Panc1 (cell line): ENCODE measurements at regions of chr14 and their contacts with region 1.

Region 1: GRCh38 chr14:103581936-103582703 is 19.4 kb downstream of the COA8 start:
- DNase-seq: no peak
- ATAC-seq: no peak; the same call in 1 of the 2 replicates
- H3K4me3 ChIP-seq: no peak overlapping the region
- H3K27ac ChIP-seq: no peak overlapping the region
- H3K4me1 ChIP-seq: no peaks in the 10 kb centered on the region
- H3K27me3 ChIP-seq: no peaks in the 10 kb centered on the region
- CTCF ChIP-seq: no peak

Region 2: GRCh38 chr14:103663506-103663905 is 81.4 kb after region 1 on chr14:
- CTCF ChIA-PET with region 1: interaction called, 13 read pairs
- POLR2A ChIA-PET with region 1: no interaction called
- in situ Hi-C with region 1: no loop called
- intact Hi-C with region 1: no loop called
- DNase-seq: no peak
- ATAC-seq: no peak
- H3K4me3 ChIP-seq: no peak overlapping the region
- H3K27ac ChIP-seq: no peak overlapping the region
- H3K4me1 ChIP-seq: no peaks in the 10 kb centered on the region
- H3K27me3 ChIP-seq: no peaks in the 10 kb centered on the region
- CTCF ChIP-seq: no peak